ENCODE measurements at regions of chr2 and their contacts with region 1.

Region 1: DNA sequence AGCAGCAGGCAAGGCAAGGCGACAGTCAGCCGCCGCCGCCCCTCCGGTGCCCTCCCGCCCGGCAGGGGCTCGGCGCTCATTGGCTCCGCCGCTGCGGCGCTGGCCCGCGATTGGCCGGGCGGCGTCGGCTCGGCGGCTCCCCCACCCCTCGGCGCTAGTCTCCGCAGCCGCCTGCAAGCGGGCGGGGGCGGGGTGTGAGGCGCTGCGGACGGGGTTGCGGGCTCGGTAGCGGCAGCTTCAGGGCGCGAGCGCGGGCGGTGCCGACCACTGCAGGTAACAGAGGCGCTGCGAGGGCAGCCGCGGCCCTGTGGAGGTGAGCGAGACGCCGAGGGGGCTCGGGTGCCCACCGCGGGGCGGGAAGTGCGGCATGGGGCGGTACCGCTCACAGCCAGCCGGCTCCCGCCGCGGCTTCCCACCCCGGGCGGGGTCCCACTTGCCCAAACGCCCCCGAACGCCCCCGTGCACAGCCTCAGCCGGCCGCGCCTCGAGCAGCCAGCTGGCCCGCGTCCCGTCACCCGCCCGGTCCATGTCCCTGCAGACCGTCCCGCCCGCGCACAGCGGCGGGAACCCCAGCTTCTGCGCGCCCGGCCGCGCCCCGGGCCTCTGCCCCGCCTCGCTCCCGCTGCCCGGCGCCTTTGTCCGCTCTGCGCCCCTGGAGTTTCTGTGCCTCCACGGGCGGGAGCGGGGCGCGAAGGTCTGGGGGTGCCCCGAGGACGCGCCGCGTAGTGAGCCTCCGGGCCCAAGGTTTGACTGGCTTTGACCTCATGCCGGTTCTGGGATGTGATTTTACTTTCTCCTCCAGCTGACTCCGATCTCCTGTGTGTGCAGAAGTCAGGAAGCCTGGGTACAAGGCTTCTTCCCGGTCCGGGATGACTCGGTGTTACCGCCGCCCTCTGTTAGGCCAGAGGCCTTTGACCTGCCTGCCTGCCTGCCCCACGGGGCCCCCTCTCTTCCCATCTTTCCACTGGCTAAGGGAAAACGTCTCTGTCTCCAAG is at the start of gene SANBR:
- DNase-seq: peak; percentile 90
- H3K4me3 ChIP-seq: peak within 1 kb of the TSS; percentile 67 to 96
- H3K27ac ChIP-seq: peak within 1 kb of the TSS; percentile 83 to 84
- H3K4me1 ChIP-seq: no peaks in the 10 kb centered on the region
- H3K27me3 ChIP-seq: no peaks in the 10 kb centered on the region
- CTCF ChIP-seq: peak in 1 of 4 experiments; percentile 9
- POLR2A ChIP-seq: peak; percentile 76
- total RNA-seq, gene SANBR: 4.8 to 7.7 TPM

Region 2: DNA sequence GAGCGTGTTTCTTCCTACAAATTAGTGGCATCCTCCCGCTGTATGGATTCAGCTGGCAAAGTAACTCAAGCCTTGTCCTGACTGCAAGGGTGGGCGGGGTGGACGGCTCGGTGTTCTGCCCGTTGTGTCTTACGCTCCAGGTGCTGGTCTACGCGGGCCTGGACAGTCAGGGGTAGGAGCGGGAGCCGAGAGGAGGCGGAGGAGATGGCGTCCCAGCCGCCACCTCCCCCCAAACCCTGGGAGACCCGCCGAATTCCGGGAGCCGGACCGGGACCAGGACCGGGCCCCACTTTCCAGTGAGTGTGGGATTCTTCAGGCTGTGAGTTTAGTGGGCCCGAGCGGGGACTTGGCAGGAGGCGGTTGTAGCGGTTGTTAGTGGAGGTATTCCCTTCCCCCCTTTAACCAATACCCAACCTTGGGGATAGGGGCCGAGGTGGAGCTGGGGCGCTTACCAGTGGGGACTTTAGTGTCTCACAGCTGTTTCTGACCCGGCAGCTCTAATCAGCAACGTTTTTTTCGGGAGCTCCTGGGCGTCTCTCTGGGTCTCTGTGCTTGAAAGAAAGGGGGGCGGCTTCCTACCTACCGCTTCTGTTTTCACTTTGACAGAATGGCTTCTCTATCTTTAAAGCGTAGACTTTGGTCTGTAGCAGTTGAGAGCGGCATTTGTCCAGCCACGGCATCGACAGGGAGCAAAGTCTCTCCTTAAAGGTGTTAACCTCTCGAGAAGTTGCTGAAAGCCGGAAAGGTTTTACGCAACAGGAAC is 48.3 kb before region 1 on chr2 and contains the starts of genes PEX13 and PUS10:
- intact Hi-C with region 1: loop called (anchors 2 kb)
- DNase-seq: peak; percentile 82
- H3K4me3 ChIP-seq: peak within 1 kb of the TSS; percentile 62 to 83
- H3K27ac ChIP-seq: peak within 1 kb of the TSS; percentile 92 to 96
- H3K4me1 ChIP-seq: no peaks in the 10 kb centered on the region
- H3K27me3 ChIP-seq: no peaks in the 10 kb centered on the region
- CTCF ChIP-seq: no peak
- POLR2A ChIP-seq: peak; percentile 60
- total RNA-seq, gene PEX13: 31.7 to 63.8 TPM
- total RNA-seq, gene PUS10: 5.6 to 10.1 TPM